GM10248 (cell line): ENCODE measurements at regions of chr6 and their contacts with region 1.

Region 1: GRCh38 chr6:113642714-113643406 is 214.3 kb upstream of the MARCKS start:
- DNase-seq: peak; percentile 73
- CTCF ChIP-seq: no peak

Region 2: DNA sequence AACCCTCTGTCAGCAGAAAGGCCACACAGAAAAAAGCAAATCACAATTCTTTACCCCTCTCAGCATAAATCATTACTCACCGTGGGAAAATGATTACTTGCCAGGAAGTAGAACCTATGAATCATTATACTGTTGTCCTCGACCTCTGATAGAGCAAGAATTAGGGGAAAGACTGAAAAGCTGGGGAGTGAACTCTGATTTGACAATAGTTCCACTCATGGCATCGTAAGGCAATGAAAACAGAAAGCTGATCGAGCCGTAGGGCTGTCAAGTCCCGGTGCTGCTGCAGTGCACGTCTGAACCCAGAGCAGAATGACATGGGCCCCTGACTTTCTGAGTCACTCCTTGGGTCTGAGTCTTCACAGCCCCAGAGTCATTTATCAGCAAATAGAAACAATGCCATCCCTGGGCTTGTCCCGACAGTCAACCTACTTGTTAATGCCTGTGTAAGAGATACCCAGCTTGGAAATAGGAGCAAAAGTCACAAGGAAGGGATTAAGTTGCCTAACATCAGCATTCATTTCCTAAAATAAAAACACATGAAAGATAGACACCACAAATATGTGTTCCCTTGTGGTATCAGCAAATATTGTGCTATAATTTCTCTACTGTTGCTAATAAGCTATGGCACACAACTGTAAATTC is 10.5 kb before region 1 on chr6:
- CTCF ChIA-PET with region 1: interaction called, 19 read pairs
- POLR2A ChIA-PET with region 1: interaction called, 20 read pairs
- DNase-seq: no peak
- CTCF ChIP-seq: no peak